ENCODE measurements at regions of chr12 and their contacts with region 1.

Region 1: DNA sequence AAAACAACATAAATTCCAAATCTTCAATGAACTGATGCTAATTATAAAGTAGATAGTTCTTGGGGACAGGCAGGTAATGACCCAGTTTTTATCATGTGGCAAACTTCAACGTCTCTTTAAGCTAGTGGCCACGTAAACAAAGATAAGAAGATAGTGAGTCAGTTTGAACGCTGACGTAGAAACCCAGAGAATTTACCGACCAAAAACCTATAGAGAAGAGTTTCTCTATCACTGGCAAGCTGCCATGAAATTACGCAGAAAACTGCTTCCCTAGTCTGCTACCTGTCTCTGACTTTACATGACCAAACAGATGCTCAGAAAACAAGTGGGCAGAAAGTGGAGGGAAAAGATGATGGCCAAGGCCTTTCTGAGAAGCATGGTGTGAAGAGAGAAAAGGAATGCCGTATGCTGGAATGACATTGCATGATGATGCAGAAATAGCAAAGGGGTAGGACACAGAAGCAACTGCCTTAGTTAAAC is 136.3 kb downstream of the ITPR2 start:
- DNase-seq: peak; percentile 80
- H3K4me3 ChIP-seq: peak overlapping the region in 1 of 3 experiments; percentile 16
- H3K27ac ChIP-seq: peak overlapping the region; percentile 100
- H3K4me1 ChIP-seq: peaks cover 54% of the 10 kb centered on the region
- H3K27me3 ChIP-seq: no peaks in the 10 kb centered on the region
- CTCF ChIP-seq: no peak
- POLR2A ChIP-seq: no peak

Region 2: GRCh38 chr12:26629864-26630263 is 66.8 kb before region 1 on chr12:
- CTCF ChIA-PET with region 1: interaction called, 112 read pairs
- POLR2A ChIA-PET with region 1: interaction called, 3 read pairs
- dilution Hi-C with region 1: no loop called
- intact Hi-C with region 1: loop called (anchors 1 kb)
- DNase-seq: peak; percentile 61
- H3K4me3 ChIP-seq: peak overlapping the region in 1 of 3 experiments; percentile 31
- H3K27ac ChIP-seq: peak overlapping the region; percentile 78
- H3K4me1 ChIP-seq: peaks cover 32% of the 10 kb centered on the region
- H3K27me3 ChIP-seq: no peaks in the 10 kb centered on the region
- CTCF ChIP-seq: peak; percentile 27 to 32
- POLR2A ChIP-seq: no peak

Region 3: DNA sequence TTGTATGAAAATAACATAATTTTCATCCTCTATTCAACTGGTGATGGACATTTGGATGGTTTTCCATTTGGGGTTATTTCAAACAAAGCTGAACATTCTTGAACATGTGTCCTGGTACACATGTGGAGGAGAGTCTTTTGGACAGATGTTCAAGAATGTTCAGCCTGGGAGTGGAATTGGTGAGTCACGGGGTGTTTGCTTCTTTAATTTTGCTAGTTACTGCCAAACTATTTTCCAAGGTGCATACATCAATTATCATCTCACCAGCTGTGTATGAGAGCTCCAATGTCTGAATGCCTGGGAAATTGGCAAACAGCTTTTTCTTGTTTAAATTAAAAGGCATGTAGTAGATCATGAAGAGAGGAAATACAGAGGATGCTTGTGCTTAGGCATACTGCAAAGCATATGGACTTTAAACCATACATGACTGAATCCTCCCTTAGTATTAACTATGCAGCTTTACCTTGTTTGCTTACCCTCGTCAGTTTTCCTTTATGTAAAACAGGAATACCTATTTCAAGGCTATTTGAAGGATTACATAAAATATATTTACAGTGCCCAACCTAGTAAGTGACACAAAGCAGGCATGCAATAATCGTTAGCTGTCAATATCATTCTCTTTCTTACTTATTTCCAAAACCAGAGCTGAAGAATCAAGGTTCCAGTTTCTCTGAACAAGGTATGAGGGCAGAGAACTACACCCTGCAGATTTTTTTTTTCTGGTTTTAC is 15.8 kb before region 1 on chr12:
- CTCF ChIA-PET with region 1: interaction called, 16 read pairs
- POLR2A ChIA-PET with region 1: interaction called, 7 read pairs
- dilution Hi-C with region 1: no loop called
- intact Hi-C with region 1: loop called (anchors 1 kb)
- DNase-seq: peak; percentile 57
- H3K4me3 ChIP-seq: no peak overlapping the region
- H3K27ac ChIP-seq: peak overlapping the region; percentile 48
- H3K4me1 ChIP-seq: peaks cover 52% of the 10 kb centered on the region
- H3K27me3 ChIP-seq: no peaks in the 10 kb centered on the region
- CTCF ChIP-seq: no peak
- POLR2A ChIP-seq: no peak